Left ventricle myocardium superior (tissue), 1 donor: ENCODE measurements at regions of chr15 and their contacts with region 1.

Region 1: GRCh38 chr15:50627351-50628055 is 59.1 kb downstream of the TRPM7 start:
- DNase-seq: no peak
- ATAC-seq: no peak

Region 2: GRCh38 chr15:50562735-50563640 is 64.5 kb before region 1 on chr15:
- intact Hi-C with region 1: loop called (anchors 10 kb)
- DNase-seq: no peak
- ATAC-seq: no peak

Region 3: GRCh38 chr15:50675536-50676144 is 48.1 kb after region 1 on chr15:
- intact Hi-C with region 1: no loop called
- DNase-seq: no peak
- ATAC-seq: no peak